ENCODE measurements at regions of chr1 and their contacts with region 1.

Region 1: GRCh38 chr1:204607910-204608309 is 77.6 kb downstream of the LRRN2 start:
- DNase-seq: no peak
- ATAC-seq: no peak
- H3K4me3 ChIP-seq: no peak overlapping the region
- H3K27ac ChIP-seq: no peak overlapping the region
- H3K4me1 ChIP-seq: no peaks in the 10 kb centered on the region
- CTCF ChIP-seq: no peak
- EP300 ChIP-seq: no peak
- POLR2A ChIP-seq: no peak
- RAD21 ChIP-seq: no peak

Region 2: GRCh38 chr1:204257954-204258752 is 349.8 kb before region 1 on chr1:
- CTCF ChIA-PET with region 1: no interaction called
- POLR2A ChIA-PET with region 1: no interaction called
- DNase-seq: peak; percentile 74 to 85
- ATAC-seq: peak; percentile 86 to 93
- H3K4me3 ChIP-seq: no peak overlapping the region
- H3K27ac ChIP-seq: peak overlapping the region; percentile 7 to 31; a peak in 1 of 6 replicates
- H3K4me1 ChIP-seq: peaks cover 35% of the 10 kb centered on the region
- CTCF ChIP-seq: peak; percentile 83
- EP300 ChIP-seq: no peak
- POLR2A ChIP-seq: no peak
- RAD21 ChIP-seq: peak; percentile 90 to 92

Region 3: DNA sequence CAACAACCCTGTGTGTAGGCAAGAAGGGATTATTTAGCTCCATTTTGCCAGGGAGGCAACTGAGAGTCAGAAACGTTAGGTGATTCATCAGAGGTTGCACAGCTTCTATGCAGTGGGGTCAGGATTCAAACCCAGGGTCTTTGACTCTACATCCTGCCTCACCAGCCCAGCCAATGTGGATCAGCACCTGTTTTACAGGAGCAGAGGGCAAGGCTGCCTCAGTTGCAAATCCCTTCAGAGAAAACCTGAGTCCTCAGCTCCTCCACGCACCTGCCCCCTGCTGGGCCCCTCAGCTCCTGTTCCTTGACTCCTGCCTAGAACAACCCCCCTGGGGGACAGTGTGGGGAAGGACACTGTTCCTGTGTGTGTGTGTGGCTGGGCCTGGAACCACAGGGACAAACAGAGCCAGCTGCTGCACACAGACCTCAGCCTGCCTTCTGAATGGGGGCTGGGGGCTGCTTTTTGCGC is 16.0 kb after region 1 on chr1:
- CTCF ChIA-PET with region 1: interaction called, 42 read pairs
- POLR2A ChIA-PET with region 1: no interaction called
- DNase-seq: peak; percentile 48 to 53
- ATAC-seq: peak; percentile 86 to 87
- H3K4me3 ChIP-seq: no peak overlapping the region
- H3K27ac ChIP-seq: peak overlapping the region in 1 of 2 experiments; percentile 42; a peak in 2 of 6 replicates
- H3K4me1 ChIP-seq: peaks cover 50% of the 10 kb centered on the region
- CTCF ChIP-seq: no peak
- EP300 ChIP-seq: no peak
- POLR2A ChIP-seq: no peak
- RAD21 ChIP-seq: peak in 1 of 2 experiments; percentile 12; a peak in 1 of 5 replicates

Region 4: DNA sequence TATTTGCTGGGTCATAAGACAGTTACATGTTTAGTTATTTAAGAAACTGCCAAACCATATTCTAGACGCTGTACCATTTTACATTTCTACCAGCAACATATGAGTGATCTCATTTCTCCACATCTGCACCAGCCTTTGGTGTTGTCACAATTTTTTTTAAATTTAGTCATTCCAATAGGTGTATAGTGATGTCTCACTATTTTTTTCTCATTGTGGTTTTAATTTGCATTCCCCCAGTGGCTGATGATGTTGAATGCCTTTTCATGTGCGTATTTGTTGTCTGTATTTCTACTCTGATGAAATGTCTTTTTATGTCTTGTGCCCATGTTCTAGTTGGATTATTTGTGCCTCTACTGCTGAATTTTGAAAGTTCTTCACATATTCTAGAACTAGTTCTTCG is 301.2 kb after region 1 on chr1:
- CTCF ChIA-PET with region 1: no interaction called
- POLR2A ChIA-PET with region 1: no interaction called
- DNase-seq: no peak
- ATAC-seq: no peak
- H3K4me3 ChIP-seq: no peak overlapping the region
- H3K27ac ChIP-seq: no peak overlapping the region
- H3K4me1 ChIP-seq: no peaks in the 10 kb centered on the region
- CTCF ChIP-seq: no peak
- EP300 ChIP-seq: no peak
- POLR2A ChIP-seq: no peak
- RAD21 ChIP-seq: no peak

Measured in A549 (cell line).